Left ventricle myocardium superior (tissue), 1 donor: ENCODE measurements at regions of chr15 and their contacts with region 1.

Region 1: DNA sequence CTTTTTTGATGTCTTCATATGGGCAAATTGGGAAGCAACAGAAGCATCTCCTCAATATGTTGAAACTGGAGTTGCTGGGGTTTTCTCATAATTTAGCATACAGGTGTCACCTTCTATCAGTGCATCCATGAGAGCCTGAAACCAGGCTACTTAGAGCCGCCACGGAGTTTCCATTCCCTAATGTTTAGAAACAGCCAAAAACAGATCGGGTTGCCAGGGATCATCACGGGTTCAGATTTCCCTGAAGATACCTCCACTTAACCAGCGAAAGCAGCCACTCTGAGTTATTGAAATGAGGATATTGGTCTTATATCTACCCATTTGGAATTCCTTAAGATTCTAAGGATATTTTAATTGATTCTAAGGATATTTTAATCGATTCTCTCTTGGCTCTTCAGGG is 14.5 kb downstream of the TERB2 start:
- DNase-seq: no peak
- ATAC-seq: no peak

Region 2: GRCh38 chr15:44482088-44482487 is 488.9 kb before region 1 on chr15:
- intact Hi-C with region 1: no loop called
- DNase-seq: no peak
- ATAC-seq: no peak

Region 3: GRCh38 chr15:44873103-44873502 is 97.9 kb before region 1 on chr15:
- intact Hi-C with region 1: no loop called
- DNase-seq: no peak
- ATAC-seq: no peak

Region 4: GRCh38 chr15:44918136-44918535 is 52.9 kb before region 1 on chr15:
- intact Hi-C with region 1: no loop called
- DNase-seq: no peak
- ATAC-seq: no peak

Region 5: GRCh38 chr15:45022871-45023658 is 52.0 kb after region 1 on chr15 and contains the start of gene SORD:
- intact Hi-C with region 1: loop called (anchors 10 kb)
- DNase-seq: peak; percentile 98
- ATAC-seq: peak; percentile 99
- total RNA-seq, gene SORD: 13.6 TPM